ENCODE measurements at regions of chr3 and their contacts with region 1.

Region 1: GRCh38 chr3:69033470-69033869 is 18.7 kb downstream of the TMF1 start:
- DNase-seq: no peak

Region 2: DNA sequence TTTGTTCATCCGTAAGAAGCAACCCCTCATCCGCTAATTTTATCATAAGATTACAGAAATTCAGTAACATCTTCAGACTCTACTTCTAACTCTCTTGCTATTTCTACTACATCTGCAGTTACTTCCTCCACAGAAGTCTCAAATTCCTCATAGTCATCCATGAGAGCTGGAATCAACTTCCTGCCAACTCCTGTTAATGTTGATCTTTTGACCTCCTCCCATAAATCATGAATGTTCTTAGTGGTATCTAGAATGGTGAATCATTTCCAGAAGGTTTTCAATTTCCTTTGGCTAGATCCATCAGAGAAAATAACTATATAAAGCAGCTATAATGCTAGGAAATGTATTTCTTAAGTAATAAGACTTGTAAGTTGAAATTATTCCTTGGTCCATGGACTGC is 216.2 kb before region 1 on chr3:
- intact Hi-C with region 1: no loop called
- DNase-seq: no peak

Region 3: GRCh38 chr3:69013253-69014021 is 20.0 kb before region 1 on chr3 and contains the start of gene EOGT:
- intact Hi-C with region 1: no loop called
- DNase-seq: peak; percentile 97
- total RNA-seq, gene EOGT: 67.6 to 87.8 TPM

Region 4: DNA sequence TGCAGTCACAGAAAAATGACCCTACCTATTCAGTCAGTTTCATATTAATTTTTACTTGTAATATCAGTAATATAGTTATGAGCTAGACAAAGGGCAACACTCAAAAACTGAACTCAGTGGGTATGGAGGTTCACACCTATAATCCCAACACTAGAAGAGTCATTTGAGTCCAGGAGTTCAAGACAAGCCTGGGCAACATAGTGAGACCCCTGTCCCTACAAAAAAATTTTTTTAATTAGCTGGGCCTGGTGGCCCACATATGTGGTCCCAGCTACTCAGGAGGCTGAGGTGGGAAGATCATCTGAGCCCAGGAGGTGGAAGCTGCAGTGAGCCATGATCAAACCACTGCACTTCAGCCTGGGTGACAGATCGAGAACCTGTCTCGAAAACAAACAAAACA is 15.5 kb after region 1 on chr3:
- intact Hi-C with region 1: loop called in 1 of 2 experiments (anchors 2 kb)
- DNase-seq: no peak

Measured in posterior vena cava (tissue), 2 donors.